Common myeloid progenitor, CD34-positive (primary cell): ENCODE measurements at regions of chr11 and their contacts with region 1.

Region 1: DNA sequence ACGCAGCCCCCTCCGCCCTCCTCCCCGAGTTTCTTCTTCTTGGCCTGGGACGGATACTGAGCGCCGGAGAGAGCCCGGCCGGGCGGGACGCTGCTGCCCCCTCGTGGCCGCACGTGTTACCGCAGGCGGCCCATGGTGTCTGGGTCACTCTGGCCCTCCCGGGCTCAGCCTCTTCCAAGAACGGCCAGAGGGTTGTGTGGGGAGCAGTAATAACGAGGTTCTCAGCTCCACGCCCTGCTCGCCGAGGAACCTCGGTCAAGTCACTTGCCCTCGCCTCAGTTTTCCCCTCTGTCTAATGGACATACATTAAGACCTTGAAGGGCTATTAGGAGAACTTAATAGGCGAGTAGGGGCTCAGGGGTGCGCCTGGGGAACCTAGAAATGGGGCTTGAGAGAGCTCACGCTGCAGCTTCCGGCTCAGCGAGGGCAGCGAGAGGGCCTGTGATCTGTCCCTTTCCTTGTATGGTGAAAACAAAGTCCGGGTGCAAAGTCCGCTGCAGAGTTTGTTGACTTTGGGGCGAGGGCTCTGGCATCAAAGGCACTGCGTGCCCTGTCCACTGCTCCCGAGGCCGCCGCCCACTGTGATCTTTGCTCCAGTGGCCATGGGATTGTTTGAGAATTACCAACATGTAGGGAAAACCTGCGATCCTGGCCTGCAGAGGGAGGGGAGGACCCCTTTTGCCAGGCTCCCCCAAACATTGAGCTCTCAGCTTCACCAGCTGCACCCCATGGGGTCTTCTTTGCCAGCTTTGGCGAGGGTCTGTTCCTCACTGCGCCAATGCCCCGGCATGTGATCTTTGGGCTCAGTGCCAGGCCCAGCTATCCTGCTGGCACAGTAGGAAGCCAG is 14.4 kb upstream of the LRP5 start:
- DNase-seq: peak; percentile 68 to 77 (median 74)
- H3K4me3 ChIP-seq: peak overlapping the region in 2 of 7 experiments; percentile 11 to 45
- H3K27ac ChIP-seq: no peak overlapping the region
- H3K4me1 ChIP-seq: peaks cover 0 to 19% (median 17%) of the 10 kb centered on the region in 4 experiments
- H3K27me3 ChIP-seq: no peaks in the 10 kb centered on the region

Region 2: DNA sequence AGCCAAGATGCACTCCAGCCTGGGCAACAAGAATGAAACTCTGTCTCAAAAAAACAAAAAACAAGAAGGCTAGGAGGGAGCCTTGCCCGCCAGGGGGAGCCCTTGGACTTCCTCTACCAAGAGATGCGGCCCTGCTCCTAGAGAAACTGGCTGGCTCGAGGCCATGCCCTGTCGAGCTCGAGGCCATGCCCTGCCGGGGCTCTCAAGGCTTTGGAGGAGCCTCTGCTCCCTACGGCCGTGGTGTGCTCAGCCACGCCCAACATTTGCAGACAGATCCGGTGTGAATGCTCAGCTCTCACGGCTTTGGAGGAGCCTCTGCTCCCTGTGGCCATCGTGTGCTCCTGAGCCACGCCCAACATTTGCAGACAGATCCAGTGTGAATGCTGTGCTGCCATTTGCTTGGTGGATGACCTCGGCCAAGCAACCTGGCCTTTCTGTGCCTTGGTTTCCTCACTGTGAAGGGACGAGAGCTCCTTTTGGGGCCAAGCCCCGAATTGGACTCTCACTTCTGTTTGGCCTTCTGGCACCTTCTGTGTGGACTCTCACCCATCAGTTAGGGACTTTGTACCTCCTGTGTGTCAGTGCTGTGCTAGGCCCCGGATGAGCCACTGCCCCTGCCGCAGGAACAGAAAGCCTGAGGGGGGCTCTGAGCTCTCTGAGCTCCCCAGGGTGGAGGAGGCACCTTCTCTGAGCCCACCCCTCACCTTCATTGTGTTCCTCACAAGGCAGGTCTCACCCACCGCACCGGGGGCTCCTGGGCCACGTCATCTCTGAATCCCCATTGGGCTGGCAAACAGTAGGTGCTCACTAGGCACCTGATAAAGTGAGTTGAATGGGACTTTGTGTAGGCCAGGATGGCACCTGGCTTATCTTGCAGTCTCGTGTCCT is 40.3 kb before region 1 on chr11:
- CTCF ChIA-PET with region 1: interaction called, 188 read pairs
- POLR2A ChIA-PET with region 1: no interaction called
- DNase-seq: peak; percentile 90 to 96 (median 92)
- H3K4me3 ChIP-seq: no peak overlapping the region
- H3K27ac ChIP-seq: no peak overlapping the region
- H3K4me1 ChIP-seq: peaks cover 0 to 4% (median 2%) of the 10 kb centered on the region in 4 experiments
- H3K27me3 ChIP-seq: no peaks in the 10 kb centered on the region

Region 3: DNA sequence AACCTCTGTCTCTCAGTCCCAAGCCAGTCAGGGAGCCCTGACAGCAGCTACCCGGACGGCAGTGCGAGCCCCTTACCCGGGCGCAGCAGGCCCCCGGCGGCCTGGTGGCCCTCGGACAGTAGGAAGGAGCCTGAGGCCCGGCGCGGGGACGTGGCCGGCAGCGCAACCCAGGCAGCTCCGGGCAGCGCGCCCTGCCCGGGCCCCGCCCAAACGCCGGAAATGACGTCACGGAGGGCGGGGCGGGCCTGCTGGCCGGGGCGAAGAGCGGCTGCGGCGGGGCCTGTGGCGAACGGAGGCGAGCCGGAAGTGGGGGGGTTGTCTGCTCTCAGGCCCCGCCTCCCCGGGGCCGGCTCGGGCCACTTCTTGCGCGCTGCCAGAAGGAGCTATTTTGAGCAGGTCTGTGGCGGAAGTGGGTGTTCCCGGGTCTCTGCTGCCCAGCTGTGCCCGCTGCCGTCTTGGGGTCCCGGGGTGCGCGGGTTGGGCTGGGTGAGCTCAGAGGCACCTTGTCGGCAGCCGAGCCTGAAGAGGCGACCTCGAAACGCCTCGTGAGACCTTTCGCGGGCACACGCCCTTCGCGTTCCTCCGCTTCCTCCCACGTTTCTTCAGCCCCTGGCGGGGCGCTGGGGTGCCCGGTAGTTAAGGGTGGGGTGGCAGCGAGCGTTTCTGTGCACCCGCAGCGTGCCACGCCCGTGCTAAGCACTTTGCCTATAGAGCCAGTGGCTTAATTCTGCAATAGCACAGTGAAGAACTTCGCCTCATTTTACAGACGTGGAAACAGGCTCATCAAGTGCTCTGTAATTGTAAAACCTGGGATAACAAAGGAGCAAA is 26.0 kb before region 1 on chr11 and contains the start of gene C11orf24:
- CTCF ChIA-PET with region 1: interaction called, 93 read pairs
- POLR2A ChIA-PET with region 1: interaction called, 4 read pairs
- DNase-seq: peak; percentile 94 to 97 (median 96)
- H3K4me3 ChIP-seq: peak within 1 kb of the TSS; percentile 68 to 89 (median 81)
- H3K27ac ChIP-seq: peak within 1 kb of the TSS; percentile 66 to 85
- H3K4me1 ChIP-seq: peaks cover 8 to 28% (median 19%) of the 10 kb centered on the region in 4 experiments
- H3K27me3 ChIP-seq: no peaks in the 10 kb centered on the region

Region 4: DNA sequence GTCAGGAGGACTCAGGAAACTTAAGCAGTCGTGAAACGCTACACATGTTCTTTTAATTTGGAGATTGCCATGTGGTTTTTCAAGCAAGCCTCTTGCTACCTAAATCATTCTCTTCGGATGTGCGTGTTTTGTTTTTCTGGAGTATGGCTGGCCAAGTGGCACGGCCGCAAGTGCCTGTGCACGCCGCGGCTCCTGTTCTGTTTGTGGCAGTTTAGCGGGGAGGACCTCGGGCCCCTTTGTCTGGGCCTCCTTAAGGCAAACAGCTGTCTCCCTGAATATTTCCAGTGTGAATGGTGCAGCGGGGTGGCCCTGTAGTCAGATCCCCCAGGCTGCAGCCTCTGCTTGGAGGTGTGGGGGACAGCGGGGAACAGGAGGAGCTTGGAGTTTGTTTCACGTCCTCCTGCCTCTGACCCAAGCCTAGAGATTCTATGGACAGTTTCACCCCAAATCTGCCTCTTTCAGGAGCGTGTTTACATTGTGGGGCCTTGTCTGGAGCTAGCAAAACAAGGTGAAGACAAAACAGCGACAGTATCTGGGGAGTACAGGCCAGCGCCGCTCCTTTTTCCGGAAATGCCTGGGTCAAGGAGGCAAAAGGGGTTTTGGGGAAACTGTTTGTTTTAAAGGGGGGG is 15.7 kb after region 1 on chr11:
- CTCF ChIA-PET with region 1: interaction called, 16 read pairs
- POLR2A ChIA-PET with region 1: no interaction called
- DNase-seq: peak in 2 of 3 donors; percentile 44 to 51
- H3K4me3 ChIP-seq: peak overlapping the region; percentile 50 to 84 (median 79)
- H3K27ac ChIP-seq: peak overlapping the region in 1 of 2 experiments; percentile 49
- H3K4me1 ChIP-seq: peaks cover 8 to 61% (median 45%) of the 10 kb centered on the region in 4 experiments
- H3K27me3 ChIP-seq: no peaks in the 10 kb centered on the region

Region 5: DNA sequence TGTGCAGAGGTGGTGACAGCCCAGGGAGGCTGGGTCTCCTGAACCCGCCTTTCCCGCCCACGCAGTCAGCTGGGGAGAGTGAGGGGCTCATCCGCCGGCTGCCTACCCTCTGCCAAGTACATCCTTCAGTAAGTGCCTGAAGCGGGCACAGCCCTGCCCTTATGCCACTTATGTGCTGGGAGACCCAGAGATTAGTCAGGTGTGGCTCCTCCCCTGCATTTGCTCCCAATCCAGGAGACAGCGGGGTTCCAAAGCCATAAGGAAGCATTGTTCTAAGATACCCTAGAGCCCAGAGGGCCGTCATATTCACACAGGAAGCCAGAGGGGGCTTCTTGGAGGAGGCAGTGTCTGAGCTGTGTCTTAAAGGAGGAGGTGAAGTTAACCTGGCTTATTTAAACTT is 156.7 kb after region 1 on chr11:
- CTCF ChIA-PET with region 1: no interaction called
- POLR2A ChIA-PET with region 1: no interaction called
- DNase-seq: no peak
- H3K4me3 ChIP-seq: no peak overlapping the region
- H3K27ac ChIP-seq: no peak overlapping the region
- H3K4me1 ChIP-seq: peaks cover 0 to 2% (median 1%) of the 10 kb centered on the region in 4 experiments
- H3K27me3 ChIP-seq: peaks cover 0 to 2% (median 0%) of the 10 kb centered on the region in 5 experiments